ENCODE measurements at regions of chr19 and their contacts with region 1.

Region 1: DNA sequence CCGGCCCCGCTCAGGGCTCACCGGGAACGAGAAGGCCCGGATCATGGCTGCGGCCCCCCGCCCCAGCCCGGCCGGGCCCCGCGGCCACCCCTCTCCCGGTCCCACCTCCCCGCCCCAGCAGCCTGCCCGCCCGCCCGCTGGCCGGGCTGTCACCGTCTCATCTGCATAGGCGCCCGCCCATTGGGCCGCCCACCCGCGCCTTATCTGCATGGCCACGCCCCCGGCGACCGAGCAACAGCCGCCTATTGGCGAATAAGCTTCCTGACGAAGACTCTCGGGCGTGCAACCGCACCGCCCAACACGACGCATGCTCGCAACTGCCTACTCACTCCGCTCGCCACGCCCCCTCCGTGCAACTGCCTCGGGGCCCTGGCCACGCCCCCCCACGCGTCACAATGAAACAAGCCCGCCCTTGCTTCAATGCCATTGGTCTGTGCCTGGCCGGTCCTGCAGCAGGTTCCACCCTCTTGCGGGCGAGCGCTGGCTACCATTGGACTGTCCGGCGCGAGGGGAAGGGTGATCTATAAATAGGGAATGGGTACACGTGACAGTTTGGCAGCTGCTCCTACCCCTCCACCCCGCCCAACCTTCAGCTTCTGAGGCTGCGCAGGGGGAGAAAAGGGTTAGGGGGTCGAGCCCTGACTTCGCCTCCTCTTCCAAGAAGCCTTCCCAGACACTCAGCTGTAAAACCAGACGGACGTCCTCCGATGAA is at the start of gene DACT3:
- DNase-seq: peak; percentile 98 to 100 (median 99)
- ATAC-seq: peak; percentile 92
- H3K4me3 ChIP-seq: peak within 1 kb of the TSS; percentile 71
- H3K4me3 Mint-ChIP-seq: peak within 1 kb of the TSS; percentile 80 to 93 (median 86)
- H3K27ac ChIP-seq: peak within 1 kb of the TSS; percentile 65
- H3K27ac Mint-ChIP-seq: peak within 1 kb of the TSS; percentile 76 to 96 (median 91)
- H3K4me1 ChIP-seq: peaks cover 14 to 20% of the 10 kb centered on the region in 2 donors
- H3K4me1 Mint-ChIP-seq: peaks cover 7 to 26% (median 20%) of the 10 kb centered on the region in 7 donors
- H3K27me3 ChIP-seq: peaks cover 6 to 10% of the 10 kb centered on the region in 2 donors
- H3K27me3 Mint-ChIP-seq: peaks cover 9 to 42% (median 18%) of the 10 kb centered on the region in 5 donors
- total RNA-seq, gene DACT3: 0.11 to 1.3 (median 0.34) TPM in 4 of 5 experiments, not detected in the other

Region 2: DNA sequence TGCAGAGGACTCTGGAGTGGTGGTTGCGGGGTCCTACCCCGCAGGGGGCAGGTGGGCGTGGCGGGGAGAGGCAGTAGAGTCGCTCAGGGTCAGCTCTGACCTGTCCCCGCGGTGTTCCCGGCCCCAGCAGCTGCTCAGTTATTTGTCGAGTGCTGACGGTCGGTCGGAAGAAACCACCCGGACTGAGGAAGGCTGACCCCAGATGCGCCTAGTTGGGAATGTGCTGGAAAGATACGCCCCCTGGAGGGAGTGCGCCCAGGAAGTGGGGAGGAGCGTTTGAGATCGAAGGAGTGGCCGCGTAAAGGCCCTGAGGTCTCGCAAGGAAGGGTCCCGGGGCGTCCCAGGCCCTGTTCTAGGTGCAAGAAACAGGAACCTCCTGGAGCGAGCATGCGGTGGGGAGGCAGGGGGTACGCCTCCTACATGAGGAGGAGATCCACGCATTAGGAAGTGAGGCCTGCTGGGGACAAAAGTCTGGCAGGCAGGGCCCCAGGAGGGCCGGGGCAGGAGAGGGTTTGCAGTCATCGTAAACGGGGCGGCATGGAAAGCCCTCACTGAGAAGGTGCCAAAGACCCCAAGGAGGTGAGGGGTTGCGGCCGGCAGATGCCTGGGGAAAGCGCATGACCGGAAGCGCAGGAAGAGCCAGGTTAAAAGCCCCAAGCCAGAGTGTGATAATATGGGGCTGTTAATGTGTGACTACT is 257.0 kb before region 1 on chr19:
- CTCF ChIA-PET with region 1: no interaction called
- POLR2A ChIA-PET with region 1: no interaction called
- intact Hi-C with region 1: loop called in 1 of 2 experiments (anchors 10 kb)
- DNase-seq: no peak
- ATAC-seq: peak; percentile 22
- H3K4me3 ChIP-seq: peak overlapping the region; percentile 2
- H3K4me3 Mint-ChIP-seq: peak overlapping the region; percentile 34 to 94 (median 74)
- H3K27ac ChIP-seq: no peak overlapping the region
- H3K27ac Mint-ChIP-seq: peak overlapping the region in 2 of 9 donors; percentile 42 to 74
- H3K4me1 ChIP-seq: peaks cover 0 to 15% of the 10 kb centered on the region in 2 donors
- H3K4me1 Mint-ChIP-seq: peaks cover 10 to 30% (median 21%) of the 10 kb centered on the region in 7 donors
- H3K27me3 ChIP-seq: peaks cover 0 to 15% of the 10 kb centered on the region in 2 donors
- H3K27me3 Mint-ChIP-seq: peaks cover 49 to 76% (median 57%) of the 10 kb centered on the region in 5 donors

Region 3: DNA sequence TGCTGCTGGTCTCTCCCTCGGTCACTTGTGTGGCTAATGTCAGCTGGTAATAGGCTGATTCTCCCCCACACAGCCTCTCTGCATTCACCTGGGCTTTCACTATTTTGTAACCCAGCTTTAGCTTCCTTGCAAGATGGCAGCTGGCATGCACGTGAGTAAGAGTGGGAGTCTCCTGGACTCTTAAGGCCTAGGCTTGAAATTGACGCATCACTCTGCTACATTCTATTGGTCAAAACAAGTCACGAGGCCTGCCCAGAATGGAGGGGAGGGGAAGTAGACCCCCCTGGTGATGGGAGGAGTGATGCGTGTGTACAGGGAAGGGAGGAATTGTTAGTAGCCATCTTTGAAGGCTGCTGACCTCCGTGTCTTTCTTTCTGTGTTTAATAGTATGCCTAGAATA is 140.6 kb before region 1 on chr19:
- CTCF ChIA-PET with region 1: interaction called, 8 read pairs
- POLR2A ChIA-PET with region 1: interaction called, 12 read pairs
- intact Hi-C with region 1: loop called in 1 of 2 experiments (anchors 1 kb)
- DNase-seq: no peak
- ATAC-seq: no peak
- H3K4me3 ChIP-seq: no peak overlapping the region
- H3K4me3 Mint-ChIP-seq: peak overlapping the region in 5 of 10 donors; percentile 29 to 66 (median 59)
- H3K27ac ChIP-seq: peak overlapping the region; percentile 54
- H3K27ac Mint-ChIP-seq: peak overlapping the region in 8 of 9 donors; percentile 21 to 98 (median 79)
- H3K4me1 ChIP-seq: peaks cover 9 to 60% of the 10 kb centered on the region in 2 donors
- H3K4me1 Mint-ChIP-seq: peaks cover 21 to 93% (median 82%) of the 10 kb centered on the region in 7 donors
- H3K27me3 ChIP-seq: no peaks in the 10 kb centered on the region
- H3K27me3 Mint-ChIP-seq: peaks cover 0 to 3% (median 0%) of the 10 kb centered on the region in 5 donors

Region 4: GRCh38 chr19:46537136-46538097 is 123.8 kb before region 1 on chr19:
- CTCF ChIA-PET with region 1: interaction called, 18 read pairs
- POLR2A ChIA-PET with region 1: no interaction called
- intact Hi-C with region 1: loop called (anchors 1 to 5 kb)
- DNase-seq: peak; percentile 27 to 64 (median 48)
- ATAC-seq: peak; percentile 82
- H3K4me3 ChIP-seq: no peak overlapping the region
- H3K4me3 Mint-ChIP-seq: no peak overlapping the region
- H3K27ac ChIP-seq: no peak overlapping the region
- H3K27ac Mint-ChIP-seq: no peak overlapping the region
- H3K4me1 ChIP-seq: no peaks in the 10 kb centered on the region
- H3K4me1 Mint-ChIP-seq: peaks cover 0 to 8% (median 6%) of the 10 kb centered on the region in 7 donors
- H3K27me3 ChIP-seq: no peaks in the 10 kb centered on the region
- H3K27me3 Mint-ChIP-seq: peaks cover 0 to 14% (median 0%) of the 10 kb centered on the region in 5 donors

Region 5: GRCh38 chr19:46614114-46614722 is 47.0 kb before region 1 on chr19:
- CTCF ChIA-PET with region 1: interaction called, 137 read pairs
- POLR2A ChIA-PET with region 1: interaction called, 46 read pairs
- intact Hi-C with region 1: loop called in 1 of 2 experiments (anchors 1 kb)
- DNase-seq: peak in 8 of 9 donors; percentile 70 to 83 (median 77)
- ATAC-seq: peak; percentile 79
- H3K4me3 ChIP-seq: no peak overlapping the region
- H3K4me3 Mint-ChIP-seq: peak overlapping the region; percentile 40 to 77 (median 71)
- H3K27ac ChIP-seq: peak overlapping the region; percentile 65
- H3K27ac Mint-ChIP-seq: peak overlapping the region; percentile 79 to 93 (median 89)
- H3K4me1 ChIP-seq: peaks cover 24 to 84% of the 10 kb centered on the region in 2 donors
- H3K4me1 Mint-ChIP-seq: peaks cover 55 to 85% (median 77%) of the 10 kb centered on the region in 7 donors
- H3K27me3 ChIP-seq: no peaks in the 10 kb centered on the region
- H3K27me3 Mint-ChIP-seq: no peaks in the 10 kb centered on the region

Region 6: GRCh38 chr19:46717034-46717723 is 56.0 kb after region 1 on chr19 and contains the start of gene PRKD2:
- CTCF ChIA-PET with region 1: no interaction called
- POLR2A ChIA-PET with region 1: interaction called, 4 read pairs
- intact Hi-C with region 1: loop called (anchors 1 kb)
- DNase-seq: peak; percentile 68 to 96 (median 80)
- ATAC-seq: peak; percentile 71
- H3K4me3 ChIP-seq: peak within 1 kb of the TSS; percentile 97
- H3K4me3 Mint-ChIP-seq: peak within 1 kb of the TSS; percentile 89 to 98 (median 95)
- H3K27ac ChIP-seq: peak within 1 kb of the TSS; percentile 98
- H3K27ac Mint-ChIP-seq: peak within 1 kb of the TSS; percentile 94 to 99 (median 97)
- H3K4me1 ChIP-seq: peaks cover 29% of the 10 kb centered on the region in 2 donors
- H3K4me1 Mint-ChIP-seq: peaks cover 30 to 57% (median 44%) of the 10 kb centered on the region in 7 donors
- H3K27me3 ChIP-seq: no peaks in the 10 kb centered on the region
- H3K27me3 Mint-ChIP-seq: no peaks in the 10 kb centered on the region
- total RNA-seq, gene PRKD2: 120 to 181 (median 123) TPM

Measured in naive thymus-derived CD4-positive, alpha-beta T cell (primary cell).